ENCODE measurements at regions of chr1 and their contacts with region 1.

Region 1: DNA sequence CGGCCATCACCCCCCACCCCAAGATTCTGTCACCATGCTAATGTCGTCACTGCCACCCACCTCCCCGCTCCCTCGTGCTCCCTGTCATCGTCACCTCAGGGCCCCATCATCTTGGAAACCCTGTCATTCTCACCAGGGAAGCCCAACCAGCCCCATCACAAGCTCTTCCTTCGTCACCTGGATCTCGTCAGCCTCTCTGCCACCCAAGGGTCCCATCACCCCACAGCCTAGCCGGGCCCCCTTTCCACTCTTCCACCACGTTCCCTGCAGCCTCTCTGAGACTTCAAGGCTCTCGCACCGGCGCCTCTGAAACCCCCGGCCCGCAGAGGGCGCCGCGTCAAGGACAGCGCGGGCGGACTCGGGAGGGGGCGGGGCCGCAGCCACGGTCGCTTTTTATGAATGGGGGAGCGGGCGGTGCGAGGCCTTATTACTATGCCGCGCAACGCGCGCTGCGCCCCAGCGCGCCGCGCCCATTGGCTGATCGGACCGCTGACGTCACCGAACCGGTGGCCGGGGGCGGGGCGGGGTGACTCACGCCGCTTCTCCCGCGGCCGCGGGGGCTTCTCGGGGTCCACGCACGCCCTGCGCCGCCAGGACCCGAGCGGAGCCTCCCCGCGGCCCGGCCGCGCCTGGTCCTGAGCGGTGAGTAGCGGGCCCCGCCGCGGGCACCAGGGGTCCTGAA is at the start of gene GPR3:
- DNase-seq: peak; percentile 95
- H3K4me3 Mint-ChIP-seq: peak within 1 kb of the TSS; percentile 74
- H3K27ac Mint-ChIP-seq: peak within 1 kb of the TSS; percentile 54
- H3K4me1 Mint-ChIP-seq: peaks cover 25% of the 10 kb centered on the region
- H3K27me3 Mint-ChIP-seq: peaks cover 3% of the 10 kb centered on the region
- total RNA-seq, gene GPR3: 0.58 to 0.65 TPM

Region 2: DNA sequence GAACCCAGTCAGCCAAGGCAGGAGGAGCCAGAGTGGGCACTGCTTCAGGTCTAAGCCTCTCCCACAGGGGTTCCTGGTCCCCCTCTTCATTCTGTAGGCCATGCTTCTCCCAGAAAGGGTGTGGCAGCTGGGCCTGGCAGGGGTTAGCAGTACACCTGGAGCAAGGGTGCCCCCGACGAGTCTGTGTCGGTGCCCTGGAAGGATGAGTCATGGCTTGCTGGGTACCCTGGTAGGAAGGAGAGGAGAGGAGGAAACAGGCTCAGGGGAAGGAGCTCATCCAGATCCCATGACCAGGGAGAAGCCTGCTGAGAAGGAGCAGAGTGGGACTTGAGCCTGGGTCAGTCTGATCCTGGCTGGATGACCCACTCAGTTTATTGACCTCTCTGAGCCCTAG is 442.3 kb before region 1 on chr1:
- CTCF ChIA-PET with region 1: no interaction called
- POLR2A ChIA-PET with region 1: no interaction called
- DNase-seq: no peak
- H3K4me3 Mint-ChIP-seq: no peak overlapping the region
- H3K27ac Mint-ChIP-seq: no peak overlapping the region
- H3K4me1 Mint-ChIP-seq: no peaks in the 10 kb centered on the region
- H3K27me3 Mint-ChIP-seq: no peaks in the 10 kb centered on the region

Region 3: DNA sequence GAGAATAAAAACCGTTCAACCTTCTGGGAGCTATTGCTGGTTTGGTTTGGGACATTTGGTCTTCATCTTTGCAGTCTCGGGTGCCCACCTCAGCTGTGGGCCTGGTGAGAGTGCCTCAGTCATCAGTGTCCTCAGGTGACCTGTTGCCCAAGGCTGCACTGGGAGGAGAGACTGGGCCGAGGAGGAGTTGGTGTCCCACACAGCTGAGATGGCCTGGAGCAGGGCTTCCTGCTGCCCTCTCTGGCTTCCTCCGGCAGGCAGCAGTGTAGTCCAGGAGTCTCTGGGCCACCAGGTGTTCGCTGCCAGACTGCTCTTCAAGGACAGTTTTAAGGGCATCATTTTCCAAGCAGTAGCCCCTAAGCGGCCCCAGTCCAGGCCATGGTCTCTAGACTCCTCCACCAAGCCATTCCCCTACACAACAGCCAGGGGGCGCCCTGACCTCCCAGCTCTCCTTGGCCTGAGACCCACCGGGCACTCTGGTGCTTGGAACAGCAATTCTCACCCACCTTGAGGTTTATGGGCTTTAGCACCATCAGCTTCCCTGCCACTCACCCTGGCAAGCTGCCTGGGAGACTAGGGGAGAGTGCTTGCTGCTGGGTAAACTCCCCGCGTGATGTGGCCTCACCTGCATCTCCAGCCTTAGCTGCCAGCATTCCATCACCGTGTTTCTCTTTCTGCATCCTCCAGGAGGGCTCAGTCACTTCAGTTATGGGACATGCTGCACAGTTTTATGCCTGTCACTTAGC is 59.5 kb before region 1 on chr1:
- CTCF ChIA-PET with region 1: interaction called, 27 read pairs
- POLR2A ChIA-PET with region 1: interaction called, 3 read pairs
- DNase-seq: peak; percentile 66
- H3K4me3 Mint-ChIP-seq: no peak overlapping the region
- H3K27ac Mint-ChIP-seq: peak overlapping the region; percentile 68
- H3K4me1 Mint-ChIP-seq: peaks cover 34% of the 10 kb centered on the region
- H3K27me3 Mint-ChIP-seq: no peaks in the 10 kb centered on the region

Measured in activated CD4-positive, alpha-beta memory T cell treated with anti-CD3 and anti-CD28 coated beads, Interleukin-2, amount 10 ng/mL, durations not matched to agents 7 days and 5 days (primary cell).